Activated naive CD4-positive, alpha-beta T cell treated with anti-CD3 and anti-CD28 coated beads for 36 hours (primary cell): ENCODE measurements at regions of chr6 and their contacts with region 1.

Region 1: GRCh38 chr6:30616811-30617564 is at the start of gene PPP1R10:
- DNase-seq: peak; percentile 99
- H3K4me3 Mint-ChIP-seq: peak within 1 kb of the TSS; percentile 87
- H3K27ac Mint-ChIP-seq: peak within 1 kb of the TSS; percentile 95
- H3K4me1 Mint-ChIP-seq: peaks cover 37% of the 10 kb centered on the region
- H3K27me3 Mint-ChIP-seq: no peaks in the 10 kb centered on the region
- total RNA-seq, gene PPP1R10: 47.1 to 49.1 TPM

Region 2: DNA sequence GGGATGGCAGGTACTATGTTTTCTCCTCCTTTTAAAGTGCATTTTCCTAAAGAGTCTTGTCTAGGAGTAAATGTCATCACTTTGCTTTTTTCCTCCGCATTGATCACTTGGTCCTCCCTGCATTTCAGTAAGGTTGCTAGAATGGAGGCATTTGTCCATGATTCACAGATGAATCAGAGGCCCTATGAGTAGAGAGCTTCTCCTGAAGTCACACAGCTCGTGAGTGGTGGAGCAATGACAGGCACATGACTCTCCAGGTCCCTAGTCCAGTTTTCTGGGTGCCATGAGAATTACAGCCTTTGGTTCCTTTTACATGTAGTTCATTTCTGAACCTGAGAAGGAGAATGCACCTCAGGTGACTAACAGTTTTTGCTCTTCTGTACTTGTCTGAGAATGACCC is 624.2 kb before region 1 on chr6:
- CTCF ChIA-PET with region 1: no interaction called
- intact Hi-C with region 1: no loop called
- DNase-seq: no peak
- H3K4me3 Mint-ChIP-seq: no peak overlapping the region
- H3K27ac Mint-ChIP-seq: no peak overlapping the region
- H3K4me1 Mint-ChIP-seq: no peaks in the 10 kb centered on the region
- H3K27me3 Mint-ChIP-seq: no peaks in the 10 kb centered on the region

Region 3: DNA sequence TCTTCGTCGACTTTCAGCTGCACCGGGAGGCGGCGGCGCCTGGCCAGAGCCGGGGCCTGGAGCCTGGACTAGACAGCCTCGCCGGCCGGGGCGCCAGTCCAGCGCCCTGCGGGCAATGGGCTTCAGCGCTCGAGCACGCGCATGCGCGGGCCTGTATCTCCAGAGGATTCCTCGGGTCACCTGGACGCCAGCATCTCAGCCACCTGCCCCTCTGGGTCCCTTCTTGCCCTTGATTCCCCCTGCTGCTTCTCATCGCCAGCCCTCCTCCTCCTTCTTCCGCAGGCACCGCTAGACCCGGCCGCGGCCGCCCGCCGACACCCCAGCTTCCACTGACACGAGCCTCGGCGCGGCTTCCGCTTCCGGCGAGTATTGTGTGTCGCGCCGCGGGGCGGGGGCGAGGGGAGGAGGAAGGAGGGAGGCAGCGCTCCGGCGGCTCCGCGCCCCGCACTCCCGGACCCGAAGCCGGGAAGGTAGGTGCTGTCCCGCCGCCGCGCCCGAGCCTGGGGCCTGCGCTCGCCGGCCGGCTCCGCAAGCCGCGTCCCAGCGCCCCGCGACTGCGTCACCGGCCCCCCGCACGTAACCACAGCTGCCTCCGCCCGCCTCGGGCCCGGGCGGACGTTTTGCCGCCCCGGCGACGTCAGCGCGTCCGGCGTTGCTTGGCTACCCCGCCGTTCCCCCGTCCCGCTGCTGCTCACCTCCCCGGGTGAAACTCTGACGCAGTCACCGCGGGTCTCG is 290.3 kb before region 1 on chr6 and contains the start of gene TRIM39:
- CTCF ChIA-PET with region 1: no interaction called
- intact Hi-C with region 1: loop called (anchors 1 kb)
- DNase-seq: peak; percentile 87
- H3K4me3 Mint-ChIP-seq: peak within 1 kb of the TSS; percentile 96
- H3K27ac Mint-ChIP-seq: peak within 1 kb of the TSS; percentile 97
- H3K4me1 Mint-ChIP-seq: peaks cover 49% of the 10 kb centered on the region
- H3K27me3 Mint-ChIP-seq: no peaks in the 10 kb centered on the region
- total RNA-seq, gene TRIM39: 14.2 to 14.5 TPM

Region 4: GRCh38 chr6:30541515-30542403 is 75.2 kb before region 1 on chr6:
- CTCF ChIA-PET with region 1: interaction called, 10 read pairs
- intact Hi-C with region 1: no loop called
- DNase-seq: peak; percentile 89
- H3K4me3 Mint-ChIP-seq: peak overlapping the region; percentile 71
- H3K27ac Mint-ChIP-seq: peak overlapping the region; percentile 20
- H3K4me1 Mint-ChIP-seq: peaks cover 41% of the 10 kb centered on the region
- H3K27me3 Mint-ChIP-seq: no peaks in the 10 kb centered on the region

Region 5: GRCh38 chr6:30578051-30578450 is 38.9 kb before region 1 on chr6:
- CTCF ChIA-PET with region 1: no interaction called
- intact Hi-C with region 1: no loop called
- DNase-seq: no peak
- H3K4me3 Mint-ChIP-seq: no peak overlapping the region
- H3K27ac Mint-ChIP-seq: peak overlapping the region; percentile 35
- H3K4me1 Mint-ChIP-seq: peaks cover 37% of the 10 kb centered on the region
- H3K27me3 Mint-ChIP-seq: no peaks in the 10 kb centered on the region

Region 6: GRCh38 chr6:30646458-30647241 is 29.7 kb after region 1 on chr6 and contains the start of gene C6orf136:
- CTCF ChIA-PET with region 1: no interaction called
- intact Hi-C with region 1: loop called (anchors 1 kb)
- DNase-seq: peak; percentile 94
- H3K4me3 Mint-ChIP-seq: peak within 1 kb of the TSS; percentile 85
- H3K27ac Mint-ChIP-seq: peak within 1 kb of the TSS; percentile 86
- H3K4me1 Mint-ChIP-seq: peaks cover 22% of the 10 kb centered on the region
- H3K27me3 Mint-ChIP-seq: no peaks in the 10 kb centered on the region
- total RNA-seq, gene C6orf136: 33.6 TPM

Region 7: GRCh38 chr6:30717042-30717844 is 100.3 kb after region 1 on chr6 and contains the start of gene MDC1:
- CTCF ChIA-PET with region 1: interaction called, 11 read pairs
- intact Hi-C with region 1: loop called (anchors 1 kb)
- DNase-seq: peak; percentile 100
- H3K4me3 Mint-ChIP-seq: peak within 1 kb of the TSS; percentile 98
- H3K27ac Mint-ChIP-seq: peak within 1 kb of the TSS; percentile 99
- H3K4me1 Mint-ChIP-seq: peaks cover 45% of the 10 kb centered on the region
- H3K27me3 Mint-ChIP-seq: no peaks in the 10 kb centered on the region
- total RNA-seq, gene MDC1: 84.1 to 84.8 TPM

Region 8: GRCh38 chr6:30907758-30908591 is 291.0 kb after region 1 on chr6 and contains the start of gene GTF2H4:
- CTCF ChIA-PET with region 1: no interaction called
- intact Hi-C with region 1: loop called (anchors 1 kb)
- DNase-seq: peak; percentile 98
- H3K4me3 Mint-ChIP-seq: peak within 1 kb of the TSS; percentile 99
- H3K27ac Mint-ChIP-seq: peak within 1 kb of the TSS; percentile 78
- H3K4me1 Mint-ChIP-seq: peaks cover 17% of the 10 kb centered on the region
- H3K27me3 Mint-ChIP-seq: no peaks in the 10 kb centered on the region
- total RNA-seq, gene GTF2H4: 33.3 to 42.4 TPM

Region 9: DNA sequence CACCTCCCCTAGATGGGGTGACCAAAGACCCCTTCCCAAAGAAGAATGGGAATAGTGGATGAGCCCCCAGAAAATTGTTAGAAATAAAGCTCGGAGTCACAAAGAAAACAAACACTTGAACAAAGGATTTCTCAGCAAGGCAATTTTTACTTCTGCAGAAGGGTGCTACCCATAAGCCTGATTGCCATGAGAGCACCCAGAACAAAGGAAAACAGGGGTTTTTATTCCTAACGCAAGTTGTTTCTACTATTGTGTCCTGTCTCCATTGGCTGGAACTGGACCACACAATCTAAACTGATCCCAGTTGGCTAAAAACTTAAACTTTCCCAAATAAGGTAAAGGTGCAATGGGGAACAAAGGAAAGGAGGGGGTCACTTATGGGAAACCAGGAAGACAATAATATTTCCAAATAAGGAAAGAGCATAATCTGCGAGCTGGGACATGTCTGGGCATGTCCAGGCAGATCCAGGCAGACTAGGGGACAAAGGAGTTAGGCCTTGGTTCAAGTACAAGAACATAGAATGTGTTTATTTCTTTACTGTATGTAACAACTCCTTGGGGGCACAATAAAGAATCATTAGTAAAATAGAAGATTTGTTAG is 720.0 kb after region 1 on chr6:
- CTCF ChIA-PET with region 1: no interaction called
- intact Hi-C with region 1: no loop called
- DNase-seq: peak; percentile 39
- H3K4me3 Mint-ChIP-seq: no peak overlapping the region
- H3K27ac Mint-ChIP-seq: peak overlapping the region; percentile 74
- H3K4me1 Mint-ChIP-seq: peaks cover 19% of the 10 kb centered on the region
- H3K27me3 Mint-ChIP-seq: no peaks in the 10 kb centered on the region